ENCODE measurements at regions of chr13 and their contacts with region 1.

Region 1: DNA sequence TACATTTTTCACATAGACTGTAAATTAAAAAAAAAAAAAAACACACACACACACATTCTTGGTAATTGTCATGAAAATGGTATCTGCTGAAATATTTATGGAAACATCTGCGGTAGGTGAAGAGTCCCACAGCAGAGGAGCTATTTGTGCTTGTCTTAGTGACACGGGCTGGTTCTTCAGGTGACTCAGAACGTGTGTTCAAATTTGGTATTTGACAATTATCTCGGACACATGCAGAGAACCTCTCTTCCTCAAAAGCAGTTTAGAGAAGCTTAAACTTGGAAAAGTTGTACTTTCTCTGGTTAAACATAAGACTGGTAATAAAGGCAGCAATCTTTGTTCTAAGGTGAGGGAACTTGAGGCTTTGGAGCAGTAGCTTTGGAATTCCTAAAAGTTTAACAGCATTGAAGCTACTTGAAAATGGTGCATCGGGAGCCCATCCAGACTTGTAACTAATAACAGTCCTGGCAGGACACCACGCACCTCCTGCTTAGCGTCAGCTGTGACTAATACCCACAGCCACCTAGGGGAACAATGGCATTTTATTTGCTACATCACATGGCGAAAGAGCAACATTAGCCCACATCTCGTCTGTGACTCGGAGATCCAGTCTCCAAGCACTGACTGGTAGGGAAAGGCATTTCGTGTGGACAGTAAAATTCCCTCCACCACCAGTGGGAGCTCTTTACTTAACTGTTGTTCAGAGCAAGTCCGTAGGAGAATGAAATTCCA is 1505.1 kb upstream of the SLC10A2 start:
- DNase-seq: peak; percentile 80
- H3K4me3 Mint-ChIP-seq: peak overlapping the region; percentile 62
- H3K27ac Mint-ChIP-seq: peak overlapping the region; percentile 28
- H3K4me1 Mint-ChIP-seq: peaks cover 11% of the 10 kb centered on the region
- H3K27me3 Mint-ChIP-seq: no peaks in the 10 kb centered on the region
- CTCF ChIP-seq: peak; percentile 74

Region 2: GRCh38 chr13:103188713-103189326 is 1382.5 kb before region 1 on chr13:
- CTCF ChIA-PET with region 1: interaction called, 5 read pairs
- POLR2A ChIA-PET with region 1: no interaction called
- intact Hi-C with region 1: loop called (anchors 5 kb)
- DNase-seq: peak; percentile 48
- H3K4me3 Mint-ChIP-seq: no peak overlapping the region
- H3K27ac Mint-ChIP-seq: no peak overlapping the region
- H3K4me1 Mint-ChIP-seq: peaks cover 6% of the 10 kb centered on the region
- H3K27me3 Mint-ChIP-seq: no peaks in the 10 kb centered on the region
- CTCF ChIP-seq: peak; percentile 54

Region 3: DNA sequence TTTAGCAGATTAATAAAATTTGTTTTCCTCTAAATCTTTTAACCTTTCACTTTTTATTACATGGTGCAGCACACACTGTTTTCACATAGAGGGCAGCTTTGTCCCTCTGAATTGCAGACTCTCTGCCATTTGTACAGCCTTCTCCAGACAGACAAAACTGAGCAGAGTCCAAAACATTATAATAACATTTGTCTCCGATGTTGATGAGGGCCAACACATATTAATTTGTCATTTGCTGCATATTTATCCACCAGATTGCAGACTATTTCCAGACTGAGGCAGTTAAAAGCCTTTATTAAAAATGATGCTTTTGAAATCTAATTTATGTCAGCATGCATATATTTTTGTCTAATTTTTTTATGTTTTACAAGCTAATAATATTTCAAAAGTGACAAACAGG is 253.2 kb before region 1 on chr13:
- CTCF ChIA-PET with region 1: interaction called, 12 read pairs
- POLR2A ChIA-PET with region 1: no interaction called
- intact Hi-C with region 1: loop called (anchors 2 kb)
- DNase-seq: peak; percentile 43
- H3K4me3 Mint-ChIP-seq: no peak overlapping the region
- H3K27ac Mint-ChIP-seq: no peak overlapping the region
- H3K4me1 Mint-ChIP-seq: peaks cover 13% of the 10 kb centered on the region
- H3K27me3 Mint-ChIP-seq: no peaks in the 10 kb centered on the region
- CTCF ChIP-seq: peak; percentile 44

Region 4: DNA sequence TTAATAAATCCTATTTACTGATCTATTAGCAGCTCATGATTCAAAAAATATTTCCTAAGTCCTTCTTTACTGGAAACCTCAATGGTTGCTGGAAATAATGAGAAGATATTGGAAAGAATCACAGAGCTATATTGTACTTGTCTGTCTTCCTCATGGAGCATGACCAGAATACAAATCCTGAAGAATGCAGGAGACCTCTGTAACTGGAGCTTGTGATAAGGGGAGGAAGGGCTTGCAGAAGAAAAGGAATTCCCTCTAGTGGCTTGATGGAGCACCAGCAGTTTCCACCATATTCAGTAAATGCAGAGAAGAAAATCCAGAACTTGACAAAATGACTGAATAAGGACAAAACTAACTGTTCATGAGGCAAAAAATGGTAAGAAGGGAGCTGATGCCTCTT is 631.0 kb after region 1 on chr13:
- CTCF ChIA-PET with region 1: no interaction called
- POLR2A ChIA-PET with region 1: no interaction called
- intact Hi-C with region 1: loop called (anchors 10 kb)
- DNase-seq: peak; percentile 34
- H3K4me3 Mint-ChIP-seq: no peak overlapping the region
- H3K27ac Mint-ChIP-seq: no peak overlapping the region
- H3K4me1 Mint-ChIP-seq: no peaks in the 10 kb centered on the region
- H3K27me3 Mint-ChIP-seq: no peaks in the 10 kb centered on the region
- CTCF ChIP-seq: peak; percentile 12

Region 5: DNA sequence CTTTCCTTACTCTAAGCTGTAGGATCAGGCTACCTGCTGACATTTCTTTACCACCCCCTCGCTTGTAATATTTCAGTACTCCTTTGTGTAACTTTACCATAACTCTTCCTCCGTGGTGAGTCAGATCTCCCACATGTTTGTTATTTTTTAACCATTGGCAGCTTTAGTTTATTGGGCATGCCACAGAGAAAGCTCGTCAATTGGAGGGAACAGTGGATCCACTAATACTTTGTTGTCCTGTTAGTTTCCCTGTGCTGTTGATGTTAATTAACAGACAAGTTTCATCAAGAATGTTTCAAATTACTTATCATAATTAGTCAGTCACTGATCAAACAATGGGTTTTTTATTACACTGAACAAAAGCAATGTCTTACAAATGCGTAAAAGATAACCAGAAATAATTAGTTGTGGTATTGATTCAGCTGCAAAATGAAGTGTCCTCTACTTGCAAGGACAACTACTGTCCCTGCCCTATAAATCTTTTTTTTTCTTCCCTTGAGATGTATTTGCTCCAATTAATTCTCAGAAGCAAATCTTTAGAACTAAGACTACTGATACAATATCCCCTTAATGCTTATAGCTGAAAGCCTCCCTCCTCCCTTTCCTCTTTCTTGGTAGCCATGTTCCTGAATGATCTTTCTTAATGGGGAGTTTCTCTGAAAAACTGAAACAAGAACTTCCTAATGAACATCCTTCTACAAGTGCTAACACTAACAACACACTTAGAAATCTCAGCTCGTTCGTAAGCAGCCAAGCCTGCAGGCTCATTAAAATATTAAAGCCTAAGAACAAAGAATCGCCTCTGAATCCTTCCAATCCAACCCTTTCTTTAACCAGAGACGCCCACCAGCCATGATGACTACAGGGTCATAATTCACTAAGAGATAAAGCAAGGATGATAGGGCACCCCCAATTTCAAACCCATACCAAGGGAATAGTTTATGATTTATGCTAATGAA is 1942.0 kb after region 1 on chr13:
- CTCF ChIA-PET with region 1: interaction called, 10 read pairs
- POLR2A ChIA-PET with region 1: no interaction called
- intact Hi-C with region 1: no loop called
- DNase-seq: peak; percentile 78
- H3K4me3 Mint-ChIP-seq: peak overlapping the region; percentile 45
- H3K27ac Mint-ChIP-seq: peak overlapping the region; percentile 96
- H3K4me1 Mint-ChIP-seq: peaks cover 32% of the 10 kb centered on the region
- H3K27me3 Mint-ChIP-seq: no peaks in the 10 kb centered on the region
- CTCF ChIP-seq: no peak

Measured in MCF 10A (cell line).